Activated T-helper 2 cell treated with anti-CD3 and anti-CD28 coated beads, Interferon-gamma antibody, Interleukin-2, Interleukin-4, amounts not matched to agents 10 μg/mL and 5 μg/mL and 100 μg/mL, durations not matched to agents 14 hours and 24 hours and 36 hours (primary cell): ENCODE measurements at regions of chr3 and their contacts with region 1.

Region 1: DNA sequence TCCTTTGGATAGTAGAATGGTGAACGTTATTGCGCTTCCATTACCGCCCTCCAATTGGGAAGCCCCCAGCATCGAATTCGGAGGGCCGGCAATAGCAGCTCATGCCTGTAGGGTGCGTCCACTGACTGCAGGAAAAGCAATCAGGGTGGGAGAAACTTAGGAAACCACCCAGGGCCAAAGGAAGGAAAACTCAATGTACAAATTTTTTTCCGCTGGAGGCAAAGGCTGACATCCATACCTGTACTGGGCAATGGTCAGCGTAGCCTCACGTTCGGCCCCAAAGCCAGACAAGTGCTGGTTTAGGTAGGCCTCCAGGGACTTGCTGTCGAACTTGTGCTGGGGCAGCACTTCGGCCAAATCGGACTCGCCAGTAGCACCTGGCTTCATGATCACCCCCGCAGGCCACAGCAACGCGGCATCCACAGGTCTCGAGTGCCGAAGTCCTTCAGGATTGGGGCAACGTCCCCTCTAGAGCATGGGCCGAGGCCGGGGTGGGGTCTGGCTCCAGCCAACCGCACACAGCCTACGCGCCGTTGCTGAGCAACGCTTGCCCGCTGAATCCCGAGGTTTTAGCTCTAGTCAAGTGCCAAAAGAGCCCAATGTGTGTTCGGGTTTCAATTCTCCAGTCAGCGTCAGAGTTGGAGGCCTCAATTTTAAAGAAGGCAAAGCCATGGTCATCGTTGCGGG is at the start of gene ACAD11:
- DNase-seq: peak; percentile 33
- H3K4me3 Mint-ChIP-seq: peak within 1 kb of the TSS; percentile 94
- H3K27ac Mint-ChIP-seq: peak within 1 kb of the TSS; percentile 97
- H3K4me1 Mint-ChIP-seq: peaks cover 38% of the 10 kb centered on the region
- H3K27me3 Mint-ChIP-seq: no peaks in the 10 kb centered on the region
- total RNA-seq, gene ACAD11: 14.9 and 18.3 TPM in 2 replicates

Region 2: GRCh38 chr3:132352541-132353143 is 306.9 kb before region 1 on chr3:
- intact Hi-C with region 1: loop called (anchors 1 kb)
- DNase-seq: peak; percentile 48
- H3K4me3 Mint-ChIP-seq: no peak overlapping the region
- H3K27ac Mint-ChIP-seq: no peak overlapping the region
- H3K4me1 Mint-ChIP-seq: peaks cover 10% of the 10 kb centered on the region
- H3K27me3 Mint-ChIP-seq: peaks cover 7% of the 10 kb centered on the region

Region 3: GRCh38 chr3:132416807-132417694 is 242.5 kb before region 1 on chr3 and contains the start of gene DNAJC13:
- intact Hi-C with region 1: loop called (anchors 1 kb)
- DNase-seq: peak; percentile 91
- H3K4me3 Mint-ChIP-seq: peak within 1 kb of the TSS; percentile 99
- H3K27ac Mint-ChIP-seq: peak within 1 kb of the TSS; percentile 95
- H3K4me1 Mint-ChIP-seq: peaks cover 39% of the 10 kb centered on the region
- H3K27me3 Mint-ChIP-seq: peaks cover 1% of the 10 kb centered on the region
- total RNA-seq, gene DNAJC13: 32.8 and 36.1 TPM in 2 replicates

Region 4: GRCh38 chr3:132535575-132536441 is 123.7 kb before region 1 on chr3:
- intact Hi-C with region 1: loop called (anchors 1 kb)
- DNase-seq: peak; percentile 24
- H3K4me3 Mint-ChIP-seq: no peak overlapping the region
- H3K27ac Mint-ChIP-seq: peak overlapping the region; percentile 72
- H3K4me1 Mint-ChIP-seq: peaks cover 22% of the 10 kb centered on the region
- H3K27me3 Mint-ChIP-seq: no peaks in the 10 kb centered on the region

Region 5: GRCh38 chr3:132543036-132543739 is 116.3 kb before region 1 on chr3:
- intact Hi-C with region 1: loop called (anchors 2 kb)
- DNase-seq: no peak
- H3K4me3 Mint-ChIP-seq: peak overlapping the region; percentile 62
- H3K27ac Mint-ChIP-seq: peak overlapping the region; percentile 99
- H3K4me1 Mint-ChIP-seq: peaks cover 49% of the 10 kb centered on the region
- H3K27me3 Mint-ChIP-seq: no peaks in the 10 kb centered on the region

Region 6: GRCh38 chr3:132573797-132574211 is 85.7 kb before region 1 on chr3:
- intact Hi-C with region 1: no loop called
- DNase-seq: no peak
- H3K4me3 Mint-ChIP-seq: no peak overlapping the region
- H3K27ac Mint-ChIP-seq: no peak overlapping the region
- H3K4me1 Mint-ChIP-seq: peaks cover 14% of the 10 kb centered on the region
- H3K27me3 Mint-ChIP-seq: no peaks in the 10 kb centered on the region

Region 7: DNA sequence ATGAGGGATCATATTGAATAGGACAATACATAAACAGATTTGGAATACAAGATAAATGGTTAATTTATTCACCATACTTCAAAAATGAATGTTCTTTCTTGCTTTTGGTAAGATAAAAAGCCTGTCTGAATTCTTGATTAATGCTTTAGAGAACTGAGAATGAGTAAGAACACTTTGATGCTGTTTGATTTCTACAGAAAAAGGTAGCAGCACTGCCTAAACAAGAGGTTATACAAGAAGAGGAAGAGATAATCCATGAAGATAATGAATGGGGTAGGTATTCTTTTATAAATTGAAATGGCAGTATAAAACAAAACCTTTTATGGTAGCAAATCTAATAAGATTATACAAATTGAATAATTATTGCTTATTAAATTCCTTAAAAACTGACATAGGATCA is 15.9 kb after region 1 on chr3:
- intact Hi-C with region 1: loop called (anchors 2 kb)
- DNase-seq: no peak
- H3K4me3 Mint-ChIP-seq: no peak overlapping the region
- H3K27ac Mint-ChIP-seq: no peak overlapping the region
- H3K4me1 Mint-ChIP-seq: peaks cover 4% of the 10 kb centered on the region
- H3K27me3 Mint-ChIP-seq: no peaks in the 10 kb centered on the region